PC-9 (cell line): ENCODE measurements at regions of chr9 and their contacts with region 1.

Region 1: DNA sequence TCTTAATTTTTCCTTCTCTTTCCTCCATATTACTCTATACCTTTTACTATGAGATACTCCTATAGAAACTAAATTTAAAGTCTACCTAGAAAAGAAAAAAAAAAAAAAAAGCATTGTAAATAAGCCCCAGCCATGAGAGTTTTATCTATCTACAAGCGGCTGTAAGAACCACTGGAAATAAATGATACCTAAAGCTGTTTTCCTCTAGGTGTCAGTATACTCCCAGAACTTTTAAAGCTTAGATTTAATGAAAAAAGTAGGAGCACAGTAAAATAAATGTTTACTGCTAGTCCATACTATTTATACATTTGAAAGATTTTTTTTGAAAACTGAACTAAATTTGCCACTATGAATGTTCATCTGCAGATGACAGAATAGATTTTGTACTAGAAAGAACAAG is 26.2 kb downstream of the TYRP1 start:
- DNase-seq: no peak
- H3K4me3 ChIP-seq: no peak overlapping the region
- H3K27ac ChIP-seq: no peak overlapping the region
- H3K4me1 ChIP-seq: no peaks in the 10 kb centered on the region
- H3K27me3 ChIP-seq: no peaks in the 10 kb centered on the region
- CTCF ChIP-seq: peak; percentile 67

Region 2: GRCh38 chr9:12775679-12776512 is 56.5 kb after region 1 on chr9:
- CTCF ChIA-PET with region 1: no interaction called
- POLR2A ChIA-PET with region 1: no interaction called
- intact Hi-C with region 1: loop called (anchors 2 kb)
- DNase-seq: peak; percentile 64 to 65
- H3K4me3 ChIP-seq: peak overlapping the region; percentile 90
- H3K27ac ChIP-seq: peak overlapping the region; percentile 78
- H3K4me1 ChIP-seq: peaks cover 23% of the 10 kb centered on the region
- H3K27me3 ChIP-seq: no peaks in the 10 kb centered on the region
- CTCF ChIP-seq: peak; percentile 48; the same call in 1 of the 2 replicates

Region 3: DNA sequence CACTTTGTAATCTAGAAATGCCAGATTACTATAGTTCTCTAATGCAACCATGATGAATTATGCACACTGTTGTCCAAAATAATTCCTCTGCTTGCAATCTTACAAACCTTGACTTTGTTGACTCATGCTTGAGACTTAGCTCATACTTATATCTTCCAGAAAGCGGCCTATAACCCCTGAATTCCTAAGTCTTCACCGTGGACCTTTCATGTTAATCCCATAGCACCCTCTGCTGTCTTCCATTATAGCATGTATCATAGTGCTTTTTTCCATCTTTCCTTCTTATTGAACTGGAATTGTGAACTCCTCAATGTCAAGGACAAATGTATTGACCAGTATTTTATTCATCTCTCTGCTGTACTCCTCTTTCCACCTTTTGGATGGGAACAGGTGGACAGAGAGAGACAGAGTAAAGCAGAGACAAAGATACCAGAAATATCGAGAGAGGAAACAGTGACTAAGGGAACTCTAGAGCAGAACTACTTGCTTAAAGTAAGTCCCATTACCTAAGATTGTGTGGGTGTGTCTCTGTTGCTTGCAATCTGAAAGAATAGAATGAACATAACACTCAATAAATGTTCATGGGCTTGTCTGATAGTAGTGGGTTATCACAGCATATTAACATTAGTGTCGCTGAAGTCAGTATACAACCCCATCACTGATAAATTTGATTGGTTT is 165.4 kb after region 1 on chr9:
- CTCF ChIA-PET with region 1: interaction called, 6 read pairs
- POLR2A ChIA-PET with region 1: no interaction called
- intact Hi-C with region 1: loop called (anchors 1 kb)
- DNase-seq: peak in 1 of 2 experiments; percentile 34
- H3K4me3 ChIP-seq: no peak overlapping the region
- H3K27ac ChIP-seq: no peak overlapping the region
- H3K4me1 ChIP-seq: no peaks in the 10 kb centered on the region
- H3K27me3 ChIP-seq: no peaks in the 10 kb centered on the region
- CTCF ChIP-seq: peak; percentile 49

Region 4: GRCh38 chr9:12988253-12988652 is 268.8 kb after region 1 on chr9:
- CTCF ChIA-PET with region 1: no interaction called
- POLR2A ChIA-PET with region 1: no interaction called
- intact Hi-C with region 1: loop called (anchors 2 kb)
- DNase-seq: no peak
- H3K4me3 ChIP-seq: no peak overlapping the region
- H3K27ac ChIP-seq: no peak overlapping the region
- H3K4me1 ChIP-seq: no peaks in the 10 kb centered on the region
- H3K27me3 ChIP-seq: no peaks in the 10 kb centered on the region
- CTCF ChIP-seq: peak; percentile 43

Region 5: DNA sequence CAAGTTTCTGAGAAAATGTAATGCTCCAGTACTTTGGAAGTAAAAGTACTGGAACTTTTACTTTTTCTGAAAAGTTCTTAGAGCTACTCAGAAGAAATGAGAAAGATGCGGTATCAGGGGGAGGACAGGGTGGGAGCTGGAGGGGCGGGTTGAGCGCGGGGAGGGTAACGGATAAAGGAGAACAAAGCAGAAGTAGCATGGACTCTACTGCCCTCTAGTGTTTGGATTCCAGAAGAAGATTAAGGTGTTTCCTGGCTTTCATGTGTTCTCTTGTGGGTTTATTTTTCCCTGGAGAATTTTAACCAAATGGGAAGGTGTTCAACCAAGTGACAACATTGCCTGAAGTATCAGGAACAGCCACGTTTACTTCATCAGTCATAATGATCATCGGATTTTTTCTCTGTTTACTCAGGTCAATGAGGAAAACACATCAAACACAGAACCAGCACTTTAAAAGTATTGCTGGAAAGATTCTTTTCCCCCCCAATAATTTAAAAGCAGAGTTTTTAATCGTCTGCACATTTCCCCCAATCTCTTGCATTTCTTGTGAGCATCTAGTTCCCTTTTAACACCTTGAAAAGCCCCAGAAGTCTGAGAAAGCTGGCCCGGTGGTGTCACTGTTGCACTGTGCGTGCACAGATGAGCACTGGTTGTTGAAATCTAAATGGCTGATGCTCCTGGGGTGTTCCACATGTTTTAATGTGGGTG is 369.4 kb after region 1 on chr9:
- CTCF ChIA-PET with region 1: interaction called, 3 read pairs
- POLR2A ChIA-PET with region 1: no interaction called
- intact Hi-C with region 1: loop called (anchors 2 kb)
- DNase-seq: peak in 1 of 2 experiments; percentile 5
- H3K4me3 ChIP-seq: no peak overlapping the region; the same call in 1 of the 2 replicates
- H3K27ac ChIP-seq: no peak overlapping the region
- H3K4me1 ChIP-seq: peaks cover 9% of the 10 kb centered on the region
- H3K27me3 ChIP-seq: no peaks in the 10 kb centered on the region
- CTCF ChIP-seq: peak; percentile 78

Region 6: DNA sequence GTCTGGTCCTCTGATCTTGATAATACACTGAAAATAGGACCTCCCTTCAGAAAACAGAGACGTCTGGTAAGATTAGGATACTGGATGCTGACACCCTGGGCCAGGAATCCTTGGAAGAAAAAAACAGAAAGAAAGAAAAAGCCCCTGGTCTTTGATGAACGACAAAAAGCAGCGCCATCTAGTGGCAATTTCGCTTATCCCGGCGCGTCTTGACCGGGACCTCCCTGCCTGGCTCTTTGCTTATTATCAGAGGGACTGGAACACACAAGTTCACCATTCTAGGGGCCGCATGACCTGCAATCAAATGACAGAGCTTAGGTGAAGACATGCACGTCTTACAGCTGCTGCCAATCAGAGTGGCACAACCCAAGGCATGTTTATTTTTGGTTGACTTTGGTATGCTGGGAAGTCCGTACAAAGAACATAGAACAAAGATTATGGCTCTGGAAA is 1709.4 kb after region 1 on chr9:
- CTCF ChIA-PET with region 1: no interaction called
- POLR2A ChIA-PET with region 1: no interaction called
- intact Hi-C with region 1: loop called (anchors 5 kb)
- DNase-seq: peak; percentile 37 to 49
- H3K4me3 ChIP-seq: no peak overlapping the region
- H3K27ac ChIP-seq: no peak overlapping the region
- H3K4me1 ChIP-seq: peaks cover 16% of the 10 kb centered on the region; the same call in 1 of the 2 replicates
- H3K27me3 ChIP-seq: no peaks in the 10 kb centered on the region
- CTCF ChIP-seq: peak; percentile 78